ENCODE measurements at regions of chr20 and their contacts with region 1.

Region 1: GRCh38 chr20:25195014-25195961 is at the start of gene ENTPD6:
- DNase-seq: peak; percentile 88 to 99 (median 94)
- ATAC-seq: peak; percentile 89
- H3K4me3 ChIP-seq: peak within 1 kb of the TSS; percentile 85
- H3K4me3 Mint-ChIP-seq: peak within 1 kb of the TSS; percentile 81 to 97 (median 92)
- H3K27ac ChIP-seq: peak within 1 kb of the TSS; percentile 91
- H3K27ac Mint-ChIP-seq: peak within 1 kb of the TSS; percentile 75 to 96 (median 93)
- H3K4me1 ChIP-seq: peaks cover 19 to 29% of the 10 kb centered on the region in 2 donors
- H3K4me1 Mint-ChIP-seq: peaks cover 23 to 56% (median 44%) of the 10 kb centered on the region in 7 donors
- H3K27me3 ChIP-seq: no peaks in the 10 kb centered on the region
- H3K27me3 Mint-ChIP-seq: peaks cover 0 to 6% (median 0%) of the 10 kb centered on the region in 5 donors
- total RNA-seq, gene ENTPD6: 41.1 to 108 (median 74.4) TPM

Region 2: GRCh38 chr20:23357767-23358591 is 1837.3 kb before region 1 on chr20:
- CTCF ChIA-PET with region 1: no interaction called
- POLR2A ChIA-PET with region 1: no interaction called
- intact Hi-C with region 1: loop called in 1 of 2 experiments (anchors 2 kb)
- DNase-seq: peak; percentile 97 to 99 (median 98)
- ATAC-seq: peak; percentile 81
- H3K4me3 ChIP-seq: peak overlapping the region; percentile 85
- H3K4me3 Mint-ChIP-seq: peak overlapping the region; percentile 91 to 95 (median 93)
- H3K27ac ChIP-seq: peak overlapping the region; percentile 92
- H3K27ac Mint-ChIP-seq: peak overlapping the region; percentile 94 to 98 (median 97)
- H3K4me1 ChIP-seq: peaks cover 14 to 22% of the 10 kb centered on the region in 2 donors
- H3K4me1 Mint-ChIP-seq: peaks cover 17 to 38% (median 34%) of the 10 kb centered on the region in 7 donors
- H3K27me3 ChIP-seq: no peaks in the 10 kb centered on the region
- H3K27me3 Mint-ChIP-seq: peaks cover 0 to 4% (median 0%) of the 10 kb centered on the region in 5 donors

Region 3: GRCh38 chr20:24863356-24863755 is 331.9 kb before region 1 on chr20:
- CTCF ChIA-PET with region 1: no interaction called
- POLR2A ChIA-PET with region 1: no interaction called
- intact Hi-C with region 1: no loop called
- DNase-seq: no peak
- ATAC-seq: no peak
- H3K4me3 ChIP-seq: no peak overlapping the region
- H3K4me3 Mint-ChIP-seq: no peak overlapping the region
- H3K27ac ChIP-seq: no peak overlapping the region
- H3K27ac Mint-ChIP-seq: no peak overlapping the region
- H3K4me1 ChIP-seq: no peaks in the 10 kb centered on the region
- H3K4me1 Mint-ChIP-seq: peaks cover 3 to 16% (median 7%) of the 10 kb centered on the region in 7 donors
- H3K27me3 ChIP-seq: no peaks in the 10 kb centered on the region
- H3K27me3 Mint-ChIP-seq: peaks cover 0 to 28% (median 12%) of the 10 kb centered on the region in 5 donors

Region 4: DNA sequence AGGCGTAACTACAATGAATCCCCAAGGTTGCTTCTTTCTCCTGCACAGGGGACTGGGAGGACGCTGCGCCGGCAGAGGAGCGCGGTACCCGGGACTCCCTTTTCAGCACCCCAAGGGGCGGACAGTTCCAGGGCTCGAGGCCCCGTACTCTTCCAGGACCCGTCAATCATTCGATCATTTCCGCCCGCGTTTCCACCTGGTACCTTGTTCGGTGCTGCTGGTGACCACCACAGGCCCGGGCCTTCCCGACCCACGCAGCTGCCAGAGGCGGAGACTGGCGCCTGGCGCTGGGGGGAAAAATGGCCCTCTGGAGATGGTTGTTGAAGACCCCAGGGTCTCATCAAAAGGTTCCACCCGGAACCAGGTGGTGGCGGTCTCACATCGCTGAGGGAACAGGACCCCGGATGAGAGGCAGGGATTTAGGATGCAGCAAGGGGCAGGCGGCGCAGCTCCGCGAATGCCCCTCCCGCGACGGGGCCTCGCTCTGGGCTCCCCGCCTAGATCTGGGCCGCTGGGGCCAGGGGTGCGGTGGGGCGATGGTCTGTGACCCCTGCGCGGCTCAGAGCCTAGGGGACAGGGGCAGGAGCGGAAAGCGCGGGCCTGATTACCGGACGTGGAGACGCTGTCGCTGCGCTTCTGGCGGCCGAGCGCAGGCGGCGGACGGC is 114.1 kb before region 1 on chr20:
- CTCF ChIA-PET with region 1: no interaction called
- POLR2A ChIA-PET with region 1: interaction called, 3 read pairs
- intact Hi-C with region 1: loop called in 1 of 2 experiments (anchors 5 kb)
- DNase-seq: peak in 6 of 9 donors; percentile 20 to 63 (median 49)
- ATAC-seq: peak; percentile 64
- H3K4me3 ChIP-seq: no peak overlapping the region
- H3K4me3 Mint-ChIP-seq: peak overlapping the region in 4 of 10 donors; percentile 19 to 35 (median 24)
- H3K27ac ChIP-seq: no peak overlapping the region
- H3K27ac Mint-ChIP-seq: no peak overlapping the region
- H3K4me1 ChIP-seq: peaks cover 14 to 21% of the 10 kb centered on the region in 2 donors
- H3K4me1 Mint-ChIP-seq: peaks cover 11 to 37% (median 27%) of the 10 kb centered on the region in 7 donors
- H3K27me3 ChIP-seq: peaks cover 23 to 25% of the 10 kb centered on the region in 2 donors
- H3K27me3 Mint-ChIP-seq: peaks cover 67 to 88% (median 74%) of the 10 kb centered on the region in 5 donors

Region 5: GRCh38 chr20:25173886-25174308 is 21.4 kb before region 1 on chr20:
- CTCF ChIA-PET with region 1: no interaction called
- POLR2A ChIA-PET with region 1: no interaction called
- intact Hi-C with region 1: no loop called
- DNase-seq: no peak
- ATAC-seq: no peak
- H3K4me3 ChIP-seq: no peak overlapping the region
- H3K4me3 Mint-ChIP-seq: no peak overlapping the region
- H3K27ac ChIP-seq: no peak overlapping the region
- H3K27ac Mint-ChIP-seq: no peak overlapping the region
- H3K4me1 ChIP-seq: no peaks in the 10 kb centered on the region
- H3K4me1 Mint-ChIP-seq: no peaks in the 10 kb centered on the region
- H3K27me3 ChIP-seq: no peaks in the 10 kb centered on the region
- H3K27me3 Mint-ChIP-seq: peaks cover 0 to 20% (median 0%) of the 10 kb centered on the region in 5 donors

Region 6: GRCh38 chr20:25247956-25248785 is 52.9 kb after region 1 on chr20 and contains the start of gene PYGB:
- CTCF ChIA-PET with region 1: interaction called, 3 read pairs
- POLR2A ChIA-PET with region 1: interaction called, 25 read pairs
- intact Hi-C with region 1: loop called (anchors 1 kb)
- DNase-seq: peak; percentile 52 to 84 (median 68)
- ATAC-seq: peak; percentile 95
- H3K4me3 ChIP-seq: peak within 1 kb of the TSS; percentile 93
- H3K4me3 Mint-ChIP-seq: peak within 1 kb of the TSS; percentile 85 to 99 (median 94)
- H3K27ac ChIP-seq: peak within 1 kb of the TSS; percentile 75
- H3K27ac Mint-ChIP-seq: peak within 1 kb of the TSS; percentile 79 to 97 (median 87)
- H3K4me1 ChIP-seq: peaks cover 5 to 7% of the 10 kb centered on the region in 2 donors
- H3K4me1 Mint-ChIP-seq: peaks cover 19 to 60% (median 49%) of the 10 kb centered on the region in 7 donors
- H3K27me3 ChIP-seq: no peaks in the 10 kb centered on the region
- H3K27me3 Mint-ChIP-seq: peaks cover 0 to 13% (median 0%) of the 10 kb centered on the region in 5 donors
- total RNA-seq, gene PYGB: 29.8 to 45.2 (median 43.6) TPM

Region 7: GRCh38 chr20:25399037-25399430 is 203.7 kb after region 1 on chr20:
- CTCF ChIA-PET with region 1: interaction called, 3 read pairs
- POLR2A ChIA-PET with region 1: no interaction called
- intact Hi-C with region 1: loop called (anchors 2 kb)
- DNase-seq: peak in 7 of 9 donors; percentile 14 to 48 (median 28)
- ATAC-seq: peak; percentile 59
- H3K4me3 ChIP-seq: no peak overlapping the region
- H3K4me3 Mint-ChIP-seq: no peak overlapping the region
- H3K27ac ChIP-seq: no peak overlapping the region
- H3K27ac Mint-ChIP-seq: no peak overlapping the region
- H3K4me1 ChIP-seq: no peaks in the 10 kb centered on the region
- H3K4me1 Mint-ChIP-seq: peaks cover 0 to 6% (median 0%) of the 10 kb centered on the region in 7 donors
- H3K27me3 ChIP-seq: no peaks in the 10 kb centered on the region
- H3K27me3 Mint-ChIP-seq: peaks cover 0 to 19% (median 0%) of the 10 kb centered on the region in 5 donors

Region 8: GRCh38 chr20:25696384-25697131 is 501.3 kb after region 1 on chr20 and contains the start of gene ZNF337:
- CTCF ChIA-PET with region 1: no interaction called
- POLR2A ChIA-PET with region 1: no interaction called
- intact Hi-C with region 1: loop called in 1 of 2 experiments (anchors 1 kb)
- DNase-seq: peak; percentile 84 to 94 (median 89)
- ATAC-seq: peak; percentile 100
- H3K4me3 ChIP-seq: peak within 1 kb of the TSS; percentile 85
- H3K4me3 Mint-ChIP-seq: peak within 1 kb of the TSS; percentile 94 to 97 (median 96)
- H3K27ac ChIP-seq: peak within 1 kb of the TSS; percentile 85
- H3K27ac Mint-ChIP-seq: peak within 1 kb of the TSS; percentile 84 to 96 (median 93)
- H3K4me1 ChIP-seq: peaks cover 5 to 9% of the 10 kb centered on the region in 2 donors
- H3K4me1 Mint-ChIP-seq: peaks cover 19 to 58% (median 57%) of the 10 kb centered on the region in 7 donors
- H3K27me3 ChIP-seq: no peaks in the 10 kb centered on the region
- H3K27me3 Mint-ChIP-seq: peaks cover 0 to 5% (median 0%) of the 10 kb centered on the region in 5 donors
- total RNA-seq, gene ZNF337: 18.7 to 39.8 (median 21.2) TPM